ENCODE measurements at regions of chr20 and their contacts with region 1.

Region 1: DNA sequence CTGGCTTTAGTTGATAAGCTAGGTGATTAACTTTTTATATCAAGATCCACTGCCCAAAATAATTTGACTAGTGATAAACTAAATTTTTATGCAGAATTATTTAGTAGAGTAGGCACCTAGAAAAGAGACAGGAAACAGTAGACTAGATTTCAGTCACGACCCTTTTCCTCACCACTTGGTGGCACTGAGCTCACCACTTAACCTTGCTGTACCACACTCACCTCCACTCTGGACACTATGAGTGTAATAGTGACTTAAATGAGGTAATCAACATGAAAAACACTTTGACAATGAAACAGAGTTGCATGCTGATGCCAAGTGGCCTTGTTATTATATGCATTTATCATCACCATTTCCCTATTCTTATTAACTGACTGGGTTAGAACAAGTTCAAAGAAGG is 730.4 kb downstream of the KIF16B start:
- DNase-seq: peak; percentile 52
- H3K4me3 ChIP-seq: no peak overlapping the region
- H3K27ac ChIP-seq: no peak overlapping the region
- H3K4me1 ChIP-seq: peaks cover 7% of the 10 kb centered on the region
- CTCF ChIP-seq: peak; percentile 76

Region 2: GRCh38 chr20:15726416-15726815 is 116.5 kb before region 1 on chr20:
- CTCF ChIA-PET with region 1: no interaction called
- POLR2A ChIA-PET with region 1: no interaction called
- intact Hi-C with region 1: no loop called
- DNase-seq: no peak
- H3K4me3 ChIP-seq: no peak overlapping the region
- H3K27ac ChIP-seq: no peak overlapping the region
- H3K4me1 ChIP-seq: no peaks in the 10 kb centered on the region
- CTCF ChIP-seq: no peak

Region 3: GRCh38 chr20:16241915-16242314 is 399.0 kb after region 1 on chr20:
- CTCF ChIA-PET with region 1: no interaction called
- POLR2A ChIA-PET with region 1: no interaction called
- intact Hi-C with region 1: loop called (anchors 5 kb)
- DNase-seq: peak; percentile 40
- H3K4me3 ChIP-seq: no peak overlapping the region
- H3K27ac ChIP-seq: no peak overlapping the region
- H3K4me1 ChIP-seq: no peaks in the 10 kb centered on the region
- CTCF ChIP-seq: peak; percentile 48

Region 4: DNA sequence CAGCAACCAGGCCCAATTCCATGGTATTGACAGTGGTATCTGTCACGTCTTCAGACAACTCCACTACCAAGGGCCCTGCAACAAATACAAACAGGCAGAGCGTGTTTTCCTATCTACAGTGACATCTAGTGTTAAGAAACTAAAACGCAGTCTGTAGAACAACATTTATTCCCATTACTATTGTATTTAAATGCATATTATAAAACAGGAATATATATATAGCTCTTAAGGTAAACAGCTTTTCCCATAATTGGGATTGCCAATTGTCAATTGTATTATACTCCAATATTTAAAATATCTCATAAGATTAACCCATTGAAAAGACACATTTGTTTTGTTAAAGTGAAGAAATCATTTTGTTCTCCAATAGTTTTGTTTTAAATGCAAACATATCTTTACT is 633.2 kb after region 1 on chr20:
- CTCF ChIA-PET with region 1: no interaction called
- POLR2A ChIA-PET with region 1: no interaction called
- intact Hi-C with region 1: loop called (anchors 10 kb)
- DNase-seq: peak; percentile 61
- H3K4me3 ChIP-seq: no peak overlapping the region
- H3K27ac ChIP-seq: no peak overlapping the region
- H3K4me1 ChIP-seq: peaks cover 4% of the 10 kb centered on the region
- CTCF ChIP-seq: peak; percentile 90